H1 (cell line): ENCODE measurements at regions of chr19 and their contacts with region 1.

Region 1: DNA sequence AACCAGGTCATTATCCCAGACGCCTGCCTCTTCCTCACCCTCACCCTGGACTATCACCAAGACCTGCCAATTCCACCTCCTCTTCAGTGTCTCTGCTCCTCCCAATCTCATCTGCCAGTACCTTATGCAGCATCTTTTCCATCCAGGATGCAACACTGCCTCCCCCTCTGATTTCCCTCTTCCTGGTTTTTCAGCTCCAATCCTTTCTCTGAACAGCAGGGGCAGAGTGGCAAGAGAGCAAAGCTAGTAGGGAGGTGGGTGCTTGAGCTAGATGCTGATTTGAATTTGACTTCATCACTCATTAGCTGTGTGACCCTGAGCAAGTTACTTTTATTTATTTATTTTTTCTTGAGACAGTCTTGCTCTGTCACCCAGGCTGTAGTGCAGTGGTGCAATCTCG is 25.6 kb upstream of the CABP5 start:
- DNase-seq: no peak
- H3K4me3 ChIP-seq: no peak overlapping the region
- H3K27ac ChIP-seq: no peak overlapping the region
- H3K4me1 ChIP-seq: 0 out of 7 replicates have a peak, but pooled peaks cover 0 to 2% (median 0%) of the 10 kb centered on the region in 4 experiments
- H3K27me3 ChIP-seq: no peaks in the 10 kb centered on the region
- CTCF ChIP-seq: peak; percentile 25 to 55 (median 41); a peak in 3 of 4 replicates
- EP300 ChIP-seq: no peak
- POLR2A ChIP-seq: no peak
- RAD21 ChIP-seq: peak; percentile 16 to 50; a peak in 3 of 4 replicates

Region 2: DNA sequence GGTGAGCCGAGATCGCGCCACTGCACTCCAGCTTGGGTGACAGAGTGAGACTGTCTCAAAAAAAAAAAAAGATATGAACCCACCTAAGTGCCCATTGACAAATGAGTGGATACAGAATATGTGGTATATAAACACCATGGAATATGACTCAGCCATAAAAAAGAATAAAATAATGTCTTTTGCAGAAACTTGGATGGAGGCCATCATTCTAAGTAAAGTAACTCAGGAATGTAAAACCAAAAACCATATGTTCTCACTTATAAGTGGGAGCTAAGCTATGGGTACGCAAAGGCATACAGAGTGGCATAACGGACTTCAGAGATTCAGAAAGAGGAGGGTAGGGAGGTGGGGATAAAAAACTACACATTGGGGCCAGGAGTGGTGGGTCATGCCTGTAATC is 11.7 kb after region 1 on chr19:
- CTCF ChIA-PET with region 1: interaction called, 12 read pairs
- POLR2A ChIA-PET with region 1: interaction called, 3 read pairs
- DNase-seq: no peak
- H3K4me3 ChIP-seq: no peak overlapping the region
- H3K27ac ChIP-seq: no peak overlapping the region
- H3K4me1 ChIP-seq: no peaks in the 10 kb centered on the region
- H3K27me3 ChIP-seq: no peaks in the 10 kb centered on the region; a peak in 1 of 7 replicates
- CTCF ChIP-seq: no peak
- EP300 ChIP-seq: no peak
- POLR2A ChIP-seq: no peak
- RAD21 ChIP-seq: no peak

Region 3: DNA sequence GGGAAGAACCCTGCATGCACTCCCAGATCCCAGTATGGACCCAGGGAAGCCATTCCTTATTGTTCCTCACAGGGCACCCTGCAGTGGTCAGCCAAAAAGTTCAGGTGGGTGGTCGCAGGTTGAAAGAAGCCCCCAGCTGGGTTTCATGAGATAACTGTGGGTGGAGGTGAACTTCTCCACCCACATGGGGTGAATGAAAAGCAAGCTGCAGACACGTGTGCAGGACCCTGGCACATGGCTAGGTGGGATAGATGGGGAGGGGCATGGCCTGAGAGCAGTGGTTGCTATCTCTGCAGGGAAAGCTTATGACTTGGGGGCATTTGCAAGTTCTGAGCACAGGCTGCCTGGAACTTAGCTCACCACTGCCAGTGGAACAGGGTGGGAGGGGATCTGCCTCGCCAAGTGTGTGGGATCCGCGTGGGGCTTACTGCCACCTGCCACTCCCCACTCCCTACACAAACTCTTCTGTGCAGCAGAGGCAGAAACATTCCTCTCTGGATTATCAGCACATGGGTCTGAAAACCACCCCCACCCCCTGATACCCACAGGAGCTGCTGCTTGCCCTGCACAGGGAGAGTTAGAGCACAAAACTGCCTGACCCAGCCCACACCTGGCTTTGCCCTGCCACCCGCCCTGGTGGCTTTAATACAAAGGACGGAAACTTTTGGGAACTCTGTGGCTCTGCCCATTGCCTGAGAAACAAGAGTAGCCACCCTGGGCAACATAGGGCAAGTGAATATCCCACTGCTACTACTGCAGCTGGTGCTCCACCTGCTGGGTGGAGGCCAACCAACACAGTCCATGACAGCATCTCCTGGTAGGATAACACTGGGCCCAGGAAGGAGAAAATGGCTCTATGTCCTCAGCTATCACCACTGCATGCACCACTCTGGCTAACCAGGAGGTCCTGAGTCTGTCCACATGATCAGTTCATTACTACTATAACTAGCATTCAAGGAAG is 16.7 kb after region 1 on chr19:
- CTCF ChIA-PET with region 1: interaction called, 12 read pairs
- POLR2A ChIA-PET with region 1: interaction called, 3 read pairs
- DNase-seq: peak in 1 of 2 experiments; percentile 67
- H3K4me3 ChIP-seq: no peak overlapping the region
- H3K27ac ChIP-seq: no peak overlapping the region
- H3K4me1 ChIP-seq: no peaks in the 10 kb centered on the region; a peak in 1 of 7 replicates
- H3K27me3 ChIP-seq: no peaks in the 10 kb centered on the region; a peak in 2 of 7 replicates
- CTCF ChIP-seq: peak; percentile 68 to 78 (median 73)
- EP300 ChIP-seq: no peak
- POLR2A ChIP-seq: 0 out of 3 replicates have a peak, but pooled peaks of 1 of the 2 experiments have one; percentile 23
- RAD21 ChIP-seq: peak; percentile 55 to 71

Region 4: GRCh38 chr19:48113190-48113917 is 43.9 kb after region 1 on chr19:
- CTCF ChIA-PET with region 1: no interaction called
- POLR2A ChIA-PET with region 1: no interaction called
- DNase-seq: no peak
- H3K4me3 ChIP-seq: no peak overlapping the region
- H3K27ac ChIP-seq: no peak overlapping the region
- H3K4me1 ChIP-seq: peaks cover 0 to 3% (median 0%) of the 10 kb centered on the region in 4 experiments; a peak in 2 of 7 replicates
- H3K27me3 ChIP-seq: no peaks in the 10 kb centered on the region
- CTCF ChIP-seq: no peak
- EP300 ChIP-seq: no peak
- POLR2A ChIP-seq: no peak
- RAD21 ChIP-seq: no peak

Region 5: DNA sequence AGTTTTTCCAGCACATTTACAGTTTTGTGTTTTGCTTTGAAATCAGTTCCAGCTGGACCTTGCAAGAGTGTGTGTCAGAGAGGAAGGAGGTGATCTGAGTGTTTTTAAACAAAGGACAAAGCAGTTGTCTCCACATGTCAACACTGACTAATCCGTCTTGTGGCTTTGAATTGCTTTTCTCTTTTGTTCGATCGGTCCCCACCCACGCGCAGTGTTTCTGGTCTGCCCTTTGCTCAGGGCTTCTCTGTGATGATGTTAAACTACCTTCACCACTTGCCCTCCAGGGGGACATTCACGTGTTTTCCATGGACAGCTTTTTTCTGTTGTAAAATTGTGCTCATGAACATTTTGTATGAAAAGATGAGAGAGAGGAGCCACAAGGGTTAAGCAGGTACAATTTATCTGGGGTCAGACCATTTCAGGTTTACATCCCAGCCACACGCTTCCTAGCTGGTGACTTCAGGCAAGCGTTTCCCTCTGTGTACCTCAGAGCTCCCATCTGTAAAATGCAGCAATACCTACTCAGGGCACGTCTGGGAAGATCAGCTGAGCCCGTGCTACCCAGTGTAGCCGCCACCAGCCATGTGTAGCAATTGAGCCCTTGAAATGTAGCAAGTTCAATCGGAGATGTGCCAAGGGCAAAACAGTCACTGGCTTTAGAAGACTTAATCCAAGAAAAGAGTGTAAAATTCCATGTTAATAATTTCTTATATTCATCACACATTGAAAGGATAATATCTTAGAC is 54.6 kb after region 1 on chr19:
- CTCF ChIA-PET with region 1: no interaction called
- POLR2A ChIA-PET with region 1: no interaction called
- DNase-seq: no peak
- H3K4me3 ChIP-seq: no peak overlapping the region
- H3K27ac ChIP-seq: no peak overlapping the region
- H3K4me1 ChIP-seq: no peaks in the 10 kb centered on the region
- H3K27me3 ChIP-seq: no peaks in the 10 kb centered on the region
- CTCF ChIP-seq: no peak
- EP300 ChIP-seq: no peak
- POLR2A ChIP-seq: no peak
- RAD21 ChIP-seq: no peak